Right ventricle myocardium inferior (tissue), 1 donor: ENCODE measurements at regions of chr3 and their contacts with region 1.

Region 1: GRCh38 chr3:38164966-38165680 is at the start of gene OXSR1:
- DNase-seq: peak; percentile 99
- ATAC-seq: peak; percentile 97
- total RNA-seq, gene OXSR1: 24.6 TPM

Region 2: DNA sequence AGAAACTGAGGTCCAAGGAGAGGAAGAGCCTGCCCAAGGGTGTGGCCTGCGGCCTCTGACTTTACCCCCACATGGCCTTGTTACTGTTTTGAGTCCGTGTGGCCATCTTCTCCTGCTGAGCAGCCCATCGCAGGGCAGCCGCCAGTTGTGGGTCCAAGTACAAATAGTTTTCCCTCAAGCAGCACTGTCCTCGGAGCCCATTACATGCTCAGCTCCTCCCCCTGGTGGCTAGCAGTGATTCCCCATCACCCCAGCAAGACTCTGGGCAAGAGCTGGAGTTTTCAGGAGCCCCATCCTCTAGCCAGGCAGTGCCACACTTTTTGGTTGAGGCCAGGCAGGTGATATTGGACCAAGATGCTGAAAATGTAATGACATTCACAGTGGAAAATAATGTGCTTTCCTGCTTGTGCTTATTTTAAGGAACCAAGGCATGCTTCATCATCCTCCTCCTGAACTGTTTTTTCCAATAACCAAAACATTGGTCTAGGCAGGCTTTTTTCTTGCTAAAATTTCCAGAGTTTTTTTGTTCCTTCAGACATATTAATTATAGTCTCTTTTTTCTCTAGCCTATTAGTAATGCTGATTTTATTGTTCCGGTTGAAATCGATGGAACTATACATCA is 197.8 kb before region 1 on chr3:
- intact Hi-C with region 1: no loop called
- DNase-seq: no peak
- ATAC-seq: peak; percentile 73

Region 3: DNA sequence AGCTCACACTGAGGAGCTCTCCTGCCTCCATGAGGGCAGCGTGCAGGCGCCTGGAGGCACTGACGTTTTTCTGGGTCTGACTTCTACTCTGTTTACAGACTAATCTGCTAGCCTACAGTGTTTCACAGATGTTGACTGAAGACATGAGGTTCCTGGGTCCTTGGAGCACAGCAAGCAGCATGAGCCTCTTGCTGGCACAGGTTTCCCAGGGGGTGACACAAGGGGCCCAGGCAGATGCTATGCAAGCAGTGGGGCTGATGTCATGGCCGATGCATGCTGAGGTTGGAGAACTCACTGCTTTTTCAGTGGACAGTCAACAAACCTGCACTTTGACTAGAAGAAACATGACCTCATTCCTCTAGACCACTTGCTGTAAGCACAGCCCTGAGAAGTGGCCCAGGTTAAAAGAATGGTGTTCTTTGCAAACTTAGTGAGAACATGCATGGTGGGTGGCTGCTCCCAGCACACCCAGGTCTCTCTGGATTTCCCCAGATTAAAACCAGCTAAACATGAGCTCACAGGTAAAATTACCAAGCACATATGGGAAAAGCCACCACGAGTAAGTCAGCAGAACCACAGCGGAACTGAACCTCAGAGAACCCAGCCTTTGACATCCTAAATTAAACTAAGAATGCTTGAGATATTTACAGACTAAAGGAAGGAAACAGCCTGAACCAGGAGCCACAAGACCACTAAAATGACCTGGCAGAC is 110.7 kb before region 1 on chr3:
- intact Hi-C with region 1: no loop called
- DNase-seq: no peak
- ATAC-seq: no peak

Region 4: DNA sequence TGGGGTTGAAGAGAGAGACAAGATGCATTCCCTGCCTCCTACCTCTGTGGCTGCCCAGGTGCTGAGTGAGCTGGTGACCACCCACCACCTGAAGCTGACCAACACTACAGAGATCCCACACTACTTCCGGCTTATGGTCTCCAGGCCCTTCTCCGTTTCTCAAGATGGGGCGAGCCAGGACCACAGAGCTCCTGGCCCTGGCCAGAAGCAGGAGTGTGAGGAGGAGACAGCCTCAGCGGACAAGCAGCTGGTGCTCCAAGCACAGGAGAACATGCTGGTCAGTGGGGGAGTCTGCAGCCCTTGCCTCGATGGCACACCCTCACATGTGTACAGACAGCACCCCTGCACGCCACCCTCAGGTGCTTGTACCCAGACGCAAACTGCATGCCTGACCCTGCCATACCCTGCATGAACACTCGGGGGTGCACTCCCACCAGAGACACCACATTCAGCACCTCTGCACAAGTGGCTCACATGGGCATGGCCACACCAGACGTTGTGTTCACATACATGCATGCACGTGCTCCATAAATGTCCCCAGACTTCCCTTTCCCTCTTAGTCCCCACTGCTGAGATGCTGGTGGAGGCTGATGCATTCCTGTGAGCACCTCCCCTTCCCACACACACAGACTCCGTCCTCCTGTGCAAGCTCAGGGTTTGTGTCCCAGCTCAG is 47.2 kb before region 1 on chr3:
- intact Hi-C with region 1: no loop called
- DNase-seq: peak; percentile 74
- ATAC-seq: peak; percentile 69

Region 5: DNA sequence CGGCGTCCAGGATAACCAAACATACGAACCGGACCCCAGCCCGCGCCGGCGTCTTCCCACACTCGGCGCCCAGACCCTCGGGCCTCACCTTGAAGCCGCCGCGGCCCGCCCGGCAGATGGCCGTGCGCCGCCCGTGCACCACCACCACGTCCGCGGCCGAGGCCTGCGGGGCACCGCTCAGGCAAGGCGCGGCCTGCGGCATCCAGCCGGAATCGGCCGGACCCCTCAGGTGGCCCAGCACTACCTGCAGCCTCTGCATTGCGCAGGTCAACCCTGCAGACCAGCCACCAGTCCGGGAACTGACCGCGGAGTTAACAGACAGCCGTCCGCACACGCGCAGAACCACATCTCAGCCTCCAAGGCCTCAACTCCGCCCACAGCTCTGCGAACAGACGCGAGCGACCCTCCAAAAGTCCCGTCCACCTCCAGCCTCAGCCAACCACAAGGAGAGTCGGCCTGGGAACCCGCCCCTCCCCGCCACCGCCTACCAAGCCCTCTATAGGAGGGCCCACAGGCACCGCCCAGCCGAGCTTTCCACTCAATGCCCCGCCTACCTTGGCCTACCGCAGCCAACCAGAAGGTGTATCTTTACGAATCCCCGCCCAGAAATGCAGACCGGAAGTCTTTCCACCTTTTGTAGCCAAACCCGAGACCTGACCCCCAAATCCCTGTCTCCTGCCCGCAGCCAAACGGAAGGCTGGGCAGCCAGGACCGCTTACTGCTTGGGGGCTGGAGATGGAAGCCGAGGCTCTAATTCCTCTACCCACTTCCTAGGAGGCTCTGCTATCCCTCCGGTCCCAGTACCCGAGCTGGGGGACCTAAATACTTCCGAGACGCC is 28.1 kb before region 1 on chr3 and contains the start of gene ACAA1:
- intact Hi-C with region 1: loop called (anchors 1 kb)
- DNase-seq: peak; percentile 100
- ATAC-seq: peak; percentile 99
- total RNA-seq, gene ACAA1: 116 TPM

Region 6: DNA sequence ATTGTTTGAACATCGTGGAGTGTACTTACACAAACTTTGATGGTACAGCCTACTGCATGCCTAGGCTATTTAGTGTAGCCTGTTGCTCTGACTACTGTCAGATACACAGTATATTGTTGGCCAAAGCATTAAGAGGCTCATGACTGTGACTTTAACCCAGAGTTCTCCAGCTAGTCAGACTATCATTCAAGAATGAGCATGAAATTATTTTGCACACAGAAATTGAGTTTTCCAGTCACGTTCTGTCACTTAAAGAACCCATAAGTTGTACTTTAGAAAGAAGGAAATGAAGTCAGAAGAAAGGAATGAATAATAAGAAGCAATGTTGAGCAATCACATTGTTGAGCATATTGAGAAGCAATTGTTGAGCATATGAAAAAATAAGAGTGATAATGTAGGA is 62.9 kb after region 1 on chr3:
- intact Hi-C with region 1: no loop called
- DNase-seq: no peak
- ATAC-seq: peak; percentile 79